Posterior vena cava (tissue), 2 donors: ENCODE measurements at regions of chr5 and their contacts with region 1.

Region 1: GRCh38 chr5:137470111-137470920 is 28.8 kb downstream of the SPOCK1 start:
- DNase-seq: peak; percentile 85

Region 2: DNA sequence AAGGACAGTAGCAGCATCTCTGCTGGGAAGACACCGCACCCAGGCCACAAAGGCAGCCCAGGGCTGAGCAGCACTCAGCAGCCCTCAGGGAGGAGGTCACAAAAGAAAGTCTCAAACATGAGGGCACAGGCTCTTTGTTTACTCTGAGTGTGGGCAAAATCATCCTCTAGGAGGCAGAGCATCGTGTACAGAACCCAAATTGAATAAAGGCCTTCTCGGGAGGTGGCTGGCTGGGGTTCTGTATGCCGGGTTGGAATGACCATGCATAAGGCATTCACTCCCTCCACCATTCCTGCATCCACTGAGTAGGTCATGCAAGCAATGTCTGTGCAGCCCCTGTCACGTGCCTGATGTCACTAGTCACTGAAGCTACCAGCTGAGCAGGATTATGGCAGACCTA is 384.0 kb before region 1 on chr5:
- intact Hi-C with region 1: loop called in 1 of 2 experiments (anchors 10 kb)
- DNase-seq: no peak

Region 3: DNA sequence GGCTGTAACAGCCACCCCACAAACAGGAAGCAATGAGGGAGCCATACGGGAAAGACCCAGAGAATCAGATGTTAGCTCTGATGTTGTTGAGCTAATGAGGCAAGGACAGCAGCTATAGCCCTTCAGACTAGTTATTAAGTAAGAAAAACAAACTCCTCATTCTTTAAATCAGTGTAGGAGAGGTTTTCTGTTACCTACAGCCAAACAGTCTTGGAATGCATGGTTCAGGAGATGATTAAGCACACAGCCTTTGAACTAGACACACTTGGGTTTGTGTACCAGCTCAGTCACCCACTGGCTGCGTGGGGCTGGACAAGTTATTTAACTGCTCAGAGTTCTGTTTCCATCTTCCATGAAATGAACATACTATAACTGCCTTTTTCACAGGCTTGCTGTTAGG is 39.3 kb before region 1 on chr5:
- intact Hi-C with region 1: no loop called
- DNase-seq: no peak